ENCODE measurements at regions of chr2 and their contacts with region 1.

Region 1: GRCh38 chr2:241762933-241763369 is 13.7 kb upstream of the GAL3ST2 start:
- DNase-seq: peak; percentile 30 to 94 (median 80)
- H3K4me3 ChIP-seq: peak overlapping the region; percentile 31
- H3K4me3 Mint-ChIP-seq: peak overlapping the region; percentile 53 to 87 (median 82)
- H3K27ac ChIP-seq: peak overlapping the region; percentile 85
- H3K27ac Mint-ChIP-seq: peak overlapping the region; percentile 92 to 100 (median 98)
- H3K4me1 ChIP-seq: peaks cover 22% of the 10 kb centered on the region
- H3K4me1 Mint-ChIP-seq: peaks cover 31 to 40% (median 40%) of the 10 kb centered on the region in 3 donors
- H3K27me3 ChIP-seq: no peaks in the 10 kb centered on the region
- H3K27me3 Mint-ChIP-seq: peaks cover 0 to 8% of the 10 kb centered on the region in 2 donors

Region 2: DNA sequence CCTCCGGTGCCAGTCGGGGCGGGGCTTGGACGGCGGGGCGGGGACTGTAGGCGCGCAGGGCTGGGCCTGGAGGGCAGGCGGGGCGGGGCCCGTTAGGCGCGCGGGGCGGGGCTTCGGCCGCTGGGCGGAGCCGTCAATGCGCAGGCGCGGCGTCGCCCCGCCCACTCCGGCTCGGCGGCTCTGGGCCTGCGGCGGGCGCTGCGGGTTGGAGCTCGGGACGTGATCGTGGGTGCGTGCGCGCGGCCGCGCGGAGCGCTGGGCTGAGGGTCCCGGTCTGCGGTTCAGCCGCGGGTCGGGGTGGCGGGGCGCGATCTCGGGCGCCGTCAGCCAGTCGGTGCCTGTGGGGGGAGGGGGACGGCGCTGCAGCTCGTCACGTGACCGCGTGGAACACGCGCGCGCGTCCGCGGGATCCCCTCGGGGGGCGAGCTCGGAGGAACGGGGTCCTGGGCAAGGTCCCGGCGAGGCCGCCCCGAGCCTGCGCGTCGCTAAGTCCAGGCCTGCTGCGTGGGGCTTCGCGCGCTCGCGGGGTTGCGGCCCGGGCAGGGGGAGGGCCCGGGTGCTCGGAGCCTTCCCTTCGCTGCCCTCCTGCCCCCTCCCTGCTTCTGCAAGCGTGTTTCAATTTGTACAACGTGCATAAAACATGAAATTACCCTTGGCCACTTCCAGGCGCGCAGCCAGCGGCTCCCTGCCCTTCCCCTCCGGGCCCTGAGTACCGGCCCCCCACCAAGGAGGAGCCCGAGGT is 28.3 kb before region 1 on chr2 and contains the start of gene D2HGDH:
- CTCF ChIA-PET with region 1: interaction called, 14 read pairs
- POLR2A ChIA-PET with region 1: interaction called, 22 read pairs
- DNase-seq: peak; percentile 90 to 95 (median 93)
- H3K4me3 ChIP-seq: peak within 1 kb of the TSS; percentile 69
- H3K4me3 Mint-ChIP-seq: peak within 1 kb of the TSS; percentile 80 to 92 (median 85)
- H3K27ac ChIP-seq: peak within 1 kb of the TSS; percentile 74
- H3K27ac Mint-ChIP-seq: peak within 1 kb of the TSS; percentile 56 to 95 (median 78)
- H3K4me1 ChIP-seq: peaks cover 12% of the 10 kb centered on the region
- H3K4me1 Mint-ChIP-seq: peaks cover 29 to 62% (median 33%) of the 10 kb centered on the region in 3 donors
- H3K27me3 ChIP-seq: no peaks in the 10 kb centered on the region
- H3K27me3 Mint-ChIP-seq: no peaks in the 10 kb centered on the region
- total RNA-seq, gene D2HGDH: 22.9 to 23.4 TPM

Region 3: DNA sequence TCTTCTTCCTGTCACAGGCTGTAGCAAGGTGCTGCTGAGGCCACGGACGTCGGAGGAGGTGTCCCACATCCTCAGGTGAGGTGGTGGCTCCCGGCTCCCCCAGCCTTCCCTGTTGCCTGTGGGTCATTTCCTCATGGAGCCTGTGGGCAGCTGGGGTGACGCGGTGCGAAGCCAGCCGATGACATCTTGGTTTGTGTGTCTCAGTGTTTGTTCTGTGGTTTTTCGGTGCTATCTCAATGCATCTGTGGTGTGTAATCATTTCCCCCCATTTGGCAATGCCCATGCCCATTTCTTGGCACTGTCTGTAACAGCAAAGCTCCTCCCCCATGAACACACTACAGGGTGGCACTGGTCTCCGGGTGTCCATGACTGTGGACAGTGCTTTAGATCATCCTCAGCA is 21.9 kb before region 1 on chr2:
- CTCF ChIA-PET with region 1: interaction called, 7 read pairs
- POLR2A ChIA-PET with region 1: interaction called, 22 read pairs
- DNase-seq: peak in 4 of 5 donors; percentile 30 to 68 (median 46)
- H3K4me3 ChIP-seq: no peak overlapping the region
- H3K4me3 Mint-ChIP-seq: peak overlapping the region; percentile 33 to 89 (median 70)
- H3K27ac ChIP-seq: no peak overlapping the region
- H3K27ac Mint-ChIP-seq: peak overlapping the region in 6 of 8 donors; percentile 34 to 97 (median 77)
- H3K4me1 ChIP-seq: peaks cover 26% of the 10 kb centered on the region
- H3K4me1 Mint-ChIP-seq: peaks cover 33 to 45% (median 43%) of the 10 kb centered on the region in 3 donors
- H3K27me3 ChIP-seq: no peaks in the 10 kb centered on the region
- H3K27me3 Mint-ChIP-seq: no peaks in the 10 kb centered on the region

Region 4: GRCh38 chr2:242031481-242032019 is 268.6 kb after region 1 on chr2:
- CTCF ChIA-PET with region 1: no interaction called
- POLR2A ChIA-PET with region 1: no interaction called
- DNase-seq: peak; percentile 30 to 82 (median 78)
- H3K4me3 ChIP-seq: peak overlapping the region; percentile 81
- H3K4me3 Mint-ChIP-seq: peak overlapping the region; percentile 87 to 92 (median 89)
- H3K27ac ChIP-seq: no peak overlapping the region
- H3K27ac Mint-ChIP-seq: peak overlapping the region; percentile 81 to 95 (median 92)
- H3K4me1 ChIP-seq: peaks cover 29% of the 10 kb centered on the region
- H3K4me1 Mint-ChIP-seq: peaks cover 48 to 59% (median 59%) of the 10 kb centered on the region in 3 donors
- H3K27me3 ChIP-seq: peaks cover 2% of the 10 kb centered on the region
- H3K27me3 Mint-ChIP-seq: peaks cover 13 to 38% of the 10 kb centered on the region in 2 donors

Measured in CD8-positive, alpha-beta memory T cell (primary cell).